Naive thymus-derived CD4-positive, alpha-beta T cell (primary cell): ENCODE measurements at regions of chr4 and their contacts with region 1.

Region 1: GRCh38 chr4:164937576-164938270 is 39.7 kb downstream of the TRIM61 start:
- DNase-seq: no peak
- ATAC-seq: no peak
- H3K4me3 ChIP-seq: no peak overlapping the region
- H3K4me3 Mint-ChIP-seq: no peak overlapping the region
- H3K27ac ChIP-seq: no peak overlapping the region
- H3K27ac Mint-ChIP-seq: no peak overlapping the region
- H3K4me1 ChIP-seq: no peaks in the 10 kb centered on the region
- H3K4me1 Mint-ChIP-seq: no peaks in the 10 kb centered on the region
- H3K27me3 ChIP-seq: no peaks in the 10 kb centered on the region
- H3K27me3 Mint-ChIP-seq: peaks cover 8 to 63% (median 34%) of the 10 kb centered on the region in 5 donors

Region 2: GRCh38 chr4:164926301-164926700 is 11.4 kb before region 1 on chr4:
- CTCF ChIA-PET with region 1: no interaction called
- POLR2A ChIA-PET with region 1: no interaction called
- intact Hi-C with region 1: no loop called
- DNase-seq: no peak
- ATAC-seq: no peak
- H3K4me3 ChIP-seq: no peak overlapping the region
- H3K4me3 Mint-ChIP-seq: no peak overlapping the region
- H3K27ac ChIP-seq: no peak overlapping the region
- H3K27ac Mint-ChIP-seq: no peak overlapping the region
- H3K4me1 ChIP-seq: no peaks in the 10 kb centered on the region
- H3K4me1 Mint-ChIP-seq: peaks cover 0 to 1% (median 0%) of the 10 kb centered on the region in 7 donors
- H3K27me3 ChIP-seq: no peaks in the 10 kb centered on the region
- H3K27me3 Mint-ChIP-seq: peaks cover 0 to 33% (median 9%) of the 10 kb centered on the region in 5 donors

Region 3: GRCh38 chr4:164948975-164949374 is 11.3 kb after region 1 on chr4:
- CTCF ChIA-PET with region 1: no interaction called
- POLR2A ChIA-PET with region 1: no interaction called
- intact Hi-C with region 1: loop called in 1 of 2 experiments (anchors 1 kb)
- DNase-seq: no peak
- ATAC-seq: no peak
- H3K4me3 ChIP-seq: no peak overlapping the region
- H3K4me3 Mint-ChIP-seq: no peak overlapping the region
- H3K27ac ChIP-seq: no peak overlapping the region
- H3K27ac Mint-ChIP-seq: no peak overlapping the region
- H3K4me1 ChIP-seq: no peaks in the 10 kb centered on the region
- H3K4me1 Mint-ChIP-seq: peaks cover 0 to 2% (median 0%) of the 10 kb centered on the region in 7 donors
- H3K27me3 ChIP-seq: no peaks in the 10 kb centered on the region
- H3K27me3 Mint-ChIP-seq: peaks cover 21 to 62% (median 45%) of the 10 kb centered on the region in 5 donors

Region 4: GRCh38 chr4:166377578-166377977 is 1439.9 kb after region 1 on chr4:
- CTCF ChIA-PET with region 1: no interaction called
- POLR2A ChIA-PET with region 1: no interaction called
- intact Hi-C with region 1: no loop called
- DNase-seq: no peak
- ATAC-seq: no peak
- H3K4me3 ChIP-seq: no peak overlapping the region
- H3K4me3 Mint-ChIP-seq: no peak overlapping the region
- H3K27ac ChIP-seq: no peak overlapping the region
- H3K27ac Mint-ChIP-seq: no peak overlapping the region
- H3K4me1 ChIP-seq: no peaks in the 10 kb centered on the region
- H3K4me1 Mint-ChIP-seq: no peaks in the 10 kb centered on the region
- H3K27me3 ChIP-seq: no peaks in the 10 kb centered on the region
- H3K27me3 Mint-ChIP-seq: no peaks in the 10 kb centered on the region